AG04450 (cell line): ENCODE measurements at regions of chr4 and their contacts with region 1.

Region 1: DNA sequence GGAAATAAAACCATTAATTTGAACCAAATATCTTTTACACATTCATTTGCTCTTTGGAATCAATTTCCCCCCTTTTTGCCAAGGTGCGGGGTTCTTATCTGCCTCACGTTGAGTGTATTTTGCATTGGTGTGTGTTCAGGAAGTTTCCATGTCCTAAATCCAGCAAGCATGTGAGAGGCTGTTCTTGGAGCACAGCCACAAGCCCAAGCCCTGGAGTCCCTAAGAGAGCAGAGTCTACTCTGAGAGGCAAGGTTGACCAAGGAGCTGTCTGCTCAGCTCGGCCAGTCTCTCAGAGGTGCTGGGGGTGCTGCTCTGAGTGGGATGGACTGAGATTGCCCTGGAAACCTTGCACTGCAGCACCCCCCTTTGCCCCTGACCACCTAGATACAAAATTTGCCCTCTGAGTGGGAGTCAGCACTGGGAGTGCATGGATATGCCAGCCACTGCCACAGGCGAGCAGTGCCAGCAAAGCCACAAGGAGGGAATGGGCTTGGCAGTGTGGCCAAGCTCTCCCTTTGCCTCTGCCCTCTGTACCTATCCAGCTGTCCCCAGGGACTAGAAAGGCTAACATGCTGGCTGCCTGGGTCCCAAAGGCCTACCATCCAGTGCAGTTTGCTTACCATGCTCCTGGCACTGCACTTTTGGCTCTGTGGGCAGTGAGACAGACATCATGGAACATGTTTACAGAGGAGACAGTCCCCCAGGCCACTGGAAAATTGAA is 20.5 kb upstream of the FAM193A start:
- DNase-seq: no peak
- H3K4me3 ChIP-seq: no peak overlapping the region
- H3K27ac ChIP-seq: no peak overlapping the region
- H3K27me3 ChIP-seq: no peaks in the 10 kb centered on the region
- CTCF ChIP-seq: no peak

Region 2: GRCh38 chr4:2497931-2498330 is 18.1 kb before region 1 on chr4:
- CTCF ChIA-PET with region 1: no interaction called
- POLR2A ChIA-PET with region 1: no interaction called
- DNase-seq: no peak
- H3K4me3 ChIP-seq: no peak overlapping the region
- H3K27ac ChIP-seq: no peak overlapping the region
- H3K27me3 ChIP-seq: no peaks in the 10 kb centered on the region
- CTCF ChIP-seq: no peak

Region 3: DNA sequence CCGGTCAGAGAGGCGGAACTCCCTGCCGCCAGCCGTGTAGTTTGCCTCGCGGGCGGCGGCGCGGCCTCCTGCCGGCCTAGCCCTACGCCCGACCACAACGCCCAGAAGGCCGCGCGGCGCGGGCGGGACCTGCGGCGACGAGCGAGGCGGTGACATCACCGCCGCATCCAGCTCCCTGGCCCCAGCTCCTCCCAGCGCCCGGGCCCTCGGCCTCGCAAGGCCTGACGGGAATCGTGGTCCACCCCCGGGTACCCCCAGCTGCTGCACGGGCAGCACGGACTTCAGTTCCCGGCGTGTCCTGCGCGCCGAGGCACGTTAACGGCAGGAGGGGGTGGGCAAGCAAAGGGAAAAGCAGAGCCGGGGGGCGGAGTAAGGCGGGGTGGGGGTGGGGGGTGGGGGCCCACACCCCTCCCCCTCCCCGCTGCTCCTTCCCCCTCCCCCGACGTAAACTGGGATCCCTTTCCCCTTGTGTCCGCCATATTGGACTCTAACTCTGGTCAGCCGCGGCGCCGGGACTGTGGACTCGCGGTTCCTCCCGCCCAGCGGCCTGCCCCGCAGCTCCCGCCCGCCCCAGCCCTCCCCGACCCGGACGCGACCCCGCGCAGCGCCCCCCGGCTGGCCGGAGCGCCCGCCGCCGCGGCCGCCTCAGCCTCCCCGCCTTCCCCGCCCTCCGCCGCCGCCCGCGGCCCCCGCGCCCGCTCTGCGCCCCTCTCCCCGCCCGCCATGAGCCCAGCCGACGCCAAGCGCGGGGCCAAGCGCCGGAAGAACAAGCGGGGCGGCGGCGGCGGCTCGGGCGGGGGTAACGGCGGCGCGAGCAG is 20.4 kb after region 1 on chr4 and contains the start of gene FAM193A:
- CTCF ChIA-PET with region 1: interaction called, 18 read pairs
- POLR2A ChIA-PET with region 1: no interaction called
- DNase-seq: peak; percentile 99
- H3K4me3 ChIP-seq: peak within 1 kb of the TSS; percentile 77
- H3K27ac ChIP-seq: peak within 1 kb of the TSS; percentile 86
- H3K27me3 ChIP-seq: no peaks in the 10 kb centered on the region
- CTCF ChIP-seq: no peak
- polyA plus RNA-seq, gene FAM193A: 5.9 and 7.8 TPM in 2 replicates